H1 (cell line): ENCODE measurements at regions of chr6 and their contacts with region 1.

Region 1: DNA sequence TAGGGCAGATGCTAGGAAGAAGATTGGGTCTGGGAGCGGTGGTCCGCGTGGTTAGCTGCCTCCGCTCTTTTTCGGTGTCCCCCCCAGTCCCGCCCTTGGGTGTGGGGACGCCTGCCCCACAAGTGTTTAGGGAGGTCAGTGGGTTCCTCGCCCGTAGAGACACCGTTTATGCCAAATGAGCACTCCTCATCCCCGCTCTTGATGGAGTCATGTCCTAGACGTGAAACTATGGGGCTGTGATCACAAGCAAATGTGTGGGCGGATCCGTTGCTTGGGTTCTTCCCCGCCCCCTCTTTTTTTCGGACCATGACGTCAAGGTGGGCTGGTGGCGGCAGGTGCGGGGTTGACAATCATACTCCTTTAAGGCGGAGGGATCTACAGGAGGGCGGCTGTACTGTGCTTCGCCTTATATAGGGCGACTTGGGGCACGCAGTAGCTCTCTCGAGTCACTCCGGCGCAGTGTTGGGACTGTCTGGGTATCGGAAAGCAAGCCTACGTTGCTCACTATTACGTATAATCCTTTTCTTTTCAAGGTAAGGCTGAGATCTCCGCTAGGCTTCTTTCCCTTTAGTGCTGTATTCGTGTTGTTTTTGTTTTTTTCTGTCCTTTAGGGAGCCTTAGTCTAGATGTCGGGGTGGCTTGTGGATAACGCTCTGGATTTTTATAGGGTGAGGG is at the start of gene HSP90AB1:
- DNase-seq: peak; percentile 94 to 97
- H3K4me3 ChIP-seq: peak within 1 kb of the TSS; percentile 55 to 100 (median 98)
- H3K27ac ChIP-seq: peak within 1 kb of the TSS; percentile 95
- H3K4me1 ChIP-seq: peaks cover 7 to 18% (median 14%) of the 10 kb centered on the region in 4 experiments
- H3K27me3 ChIP-seq: no peaks in the 10 kb centered on the region
- CTCF ChIP-seq: no peak
- EP300 ChIP-seq: no peak
- POLR2A ChIP-seq: peak; percentile 99 to 100
- RAD21 ChIP-seq: no peak
- total RNA-seq, gene HSP90AB1: 2,224 and 2,297 TPM in 2 replicates

Region 2: GRCh38 chr6:44096612-44097011 is 150.2 kb before region 1 on chr6:
- CTCF ChIA-PET with region 1: interaction called, 5 read pairs
- POLR2A ChIA-PET with region 1: interaction called, 18 read pairs
- DNase-seq: peak in 1 of 2 experiments; percentile 75
- H3K4me3 ChIP-seq: no peak overlapping the region
- H3K27ac ChIP-seq: no peak overlapping the region
- H3K4me1 ChIP-seq: no peaks in the 10 kb centered on the region
- H3K27me3 ChIP-seq: no peaks in the 10 kb centered on the region
- CTCF ChIP-seq: peak; percentile 87 to 97 (median 87)
- EP300 ChIP-seq: no peak
- POLR2A ChIP-seq: no peak
- RAD21 ChIP-seq: peak; percentile 89 to 90

Region 3: GRCh38 chr6:44172731-44173500 is 73.9 kb before region 1 on chr6:
- CTCF ChIA-PET with region 1: interaction called, 19 read pairs
- POLR2A ChIA-PET with region 1: interaction called, 33 read pairs
- DNase-seq: peak in 1 of 2 experiments; percentile 91
- H3K4me3 ChIP-seq: no peak overlapping the region
- H3K27ac ChIP-seq: no peak overlapping the region
- H3K4me1 ChIP-seq: peaks cover 0 to 12% (median 3%) of the 10 kb centered on the region in 4 experiments; a peak in 6 of 7 replicates
- H3K27me3 ChIP-seq: no peaks in the 10 kb centered on the region
- CTCF ChIP-seq: peak; percentile 89 to 94 (median 90)
- EP300 ChIP-seq: no peak
- POLR2A ChIP-seq: no peak
- RAD21 ChIP-seq: peak; percentile 93 to 94

Region 4: DNA sequence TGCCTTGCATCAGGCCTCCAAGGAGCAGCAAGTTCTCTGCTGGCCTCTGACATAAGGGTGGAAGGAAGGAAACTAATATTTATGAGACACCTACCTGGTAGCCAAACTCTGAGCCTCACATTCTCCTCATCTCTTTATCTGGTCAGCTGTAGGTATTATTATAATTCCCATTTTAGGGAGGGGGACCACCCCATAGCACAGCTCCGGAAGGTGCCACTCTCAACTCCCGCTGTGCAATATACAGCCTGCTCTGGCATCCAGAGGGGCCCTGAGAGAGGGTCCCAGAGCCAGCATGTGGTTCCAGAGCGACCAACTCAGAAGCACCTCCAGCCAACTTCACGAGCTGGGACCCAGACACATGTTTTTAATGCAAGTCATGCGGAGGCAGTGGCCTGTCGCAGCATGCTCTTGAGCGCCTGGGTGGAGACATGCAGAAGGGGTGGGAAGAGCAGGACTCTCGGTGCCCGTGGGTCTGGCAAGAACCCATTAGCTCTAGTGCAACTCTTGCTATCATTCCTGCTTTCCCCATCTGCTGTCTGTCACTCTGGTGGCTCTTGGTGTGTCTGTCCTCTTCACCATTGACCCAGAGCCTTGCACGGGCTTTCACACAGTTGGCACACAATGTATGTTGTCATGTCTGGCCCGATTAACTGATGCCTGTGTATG is 45.0 kb before region 1 on chr6:
- CTCF ChIA-PET with region 1: interaction called, 6 read pairs
- POLR2A ChIA-PET with region 1: interaction called, 60 read pairs
- DNase-seq: no peak
- H3K4me3 ChIP-seq: no peak overlapping the region; a peak in 1 of 8 replicates
- H3K27ac ChIP-seq: peak overlapping the region; percentile 93
- H3K4me1 ChIP-seq: peaks cover 20 to 30% (median 28%) of the 10 kb centered on the region in 4 experiments
- H3K27me3 ChIP-seq: no peaks in the 10 kb centered on the region
- CTCF ChIP-seq: no peak
- EP300 ChIP-seq: no peak
- POLR2A ChIP-seq: no peak
- RAD21 ChIP-seq: no peak

Region 5: GRCh38 chr6:44257025-44257752 is 10.4 kb after region 1 on chr6 and contains the start of gene SLC35B2:
- CTCF ChIA-PET with region 1: interaction called, 43 read pairs
- POLR2A ChIA-PET with region 1: interaction called, 581 read pairs
- DNase-seq: peak in 1 of 2 experiments; percentile 85
- H3K4me3 ChIP-seq: peak within 1 kb of the TSS; percentile 67 to 85 (median 75)
- H3K27ac ChIP-seq: peak within 1 kb of the TSS; percentile 88
- H3K4me1 ChIP-seq: peaks cover 1 to 20% (median 7%) of the 10 kb centered on the region in 4 experiments; a peak in 6 of 7 replicates
- H3K27me3 ChIP-seq: no peaks in the 10 kb centered on the region
- CTCF ChIP-seq: peak in 2 of 3 experiments; percentile 70 to 91; a peak in 3 of 4 replicates
- EP300 ChIP-seq: peak; percentile 21 to 23; a peak in 2 of 3 replicates
- POLR2A ChIP-seq: peak in 1 of 2 experiments; percentile 67; a peak in 1 of 3 replicates
- RAD21 ChIP-seq: peak; percentile 6 to 59; a peak in 3 of 4 replicates
- total RNA-seq, gene SLC35B2: 29.5 and 32.3 TPM in 2 replicates

Region 6: GRCh38 chr6:44291841-44292240 is 45.0 kb after region 1 on chr6:
- CTCF ChIA-PET with region 1: no interaction called
- POLR2A ChIA-PET with region 1: interaction called, 34 read pairs
- DNase-seq: no peak
- H3K4me3 ChIP-seq: no peak overlapping the region
- H3K27ac ChIP-seq: no peak overlapping the region
- H3K4me1 ChIP-seq: no peaks in the 10 kb centered on the region; a peak in 2 of 7 replicates
- H3K27me3 ChIP-seq: peaks cover 0 to 20% (median 12%) of the 10 kb centered on the region in 4 experiments; a peak in 6 of 7 replicates
- CTCF ChIP-seq: no peak
- EP300 ChIP-seq: no peak
- POLR2A ChIP-seq: no peak
- RAD21 ChIP-seq: no peak

Region 7: DNA sequence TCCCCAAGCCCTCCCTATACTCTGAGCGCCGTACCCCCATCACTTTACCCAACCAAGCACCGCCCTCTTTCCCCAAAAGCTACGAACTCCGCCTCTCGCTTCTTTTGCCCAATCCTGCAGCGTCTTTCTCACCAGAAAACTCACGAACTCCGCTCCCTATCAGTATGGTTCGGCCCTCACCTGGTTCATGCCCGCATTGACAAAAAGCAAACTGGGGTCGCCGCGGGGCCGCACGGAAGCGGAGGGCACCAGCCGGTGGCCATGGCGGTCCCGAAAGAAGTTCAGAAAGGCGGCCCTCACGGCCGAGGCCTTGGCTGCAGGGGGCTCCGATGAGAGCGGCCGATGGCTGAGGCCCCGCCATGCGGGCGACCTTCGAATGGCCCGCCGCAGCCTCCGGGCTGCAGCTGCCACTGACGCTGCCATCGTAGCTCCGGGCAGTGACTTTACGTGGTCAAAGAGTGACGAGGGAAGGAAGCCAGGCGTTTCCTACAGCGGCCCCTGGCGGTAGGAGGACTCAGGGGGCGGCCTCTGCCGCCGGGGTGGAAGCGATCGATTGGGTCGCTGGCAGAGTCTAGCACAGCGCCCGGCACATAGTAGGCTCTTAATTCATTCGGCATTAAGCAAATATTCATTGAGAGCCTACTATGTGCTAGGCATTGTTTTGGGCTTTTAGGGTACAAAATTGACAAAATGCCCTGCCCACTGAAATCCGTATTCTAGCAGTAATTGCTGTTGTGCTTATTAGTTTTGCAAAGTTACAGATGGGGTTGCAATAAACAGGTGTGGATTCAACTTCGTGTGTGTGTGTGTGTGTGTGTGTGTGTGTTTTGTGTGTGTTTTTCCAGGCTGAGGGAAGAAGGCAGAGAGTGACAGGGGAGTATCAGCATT is 66.3 kb after region 1 on chr6 and contains the start of gene AARS2:
- CTCF ChIA-PET with region 1: interaction called, 4 read pairs
- POLR2A ChIA-PET with region 1: interaction called, 30 read pairs
- DNase-seq: peak; percentile 68 to 99
- H3K4me3 ChIP-seq: peak within 1 kb of the TSS; percentile 66 to 91 (median 88)
- H3K27ac ChIP-seq: peak within 1 kb of the TSS; percentile 64; the same call in 1 of the 2 replicates
- H3K4me1 ChIP-seq: peaks cover 3 to 6% (median 3%) of the 10 kb centered on the region in 4 experiments
- H3K27me3 ChIP-seq: peaks cover 0 to 1% (median 0%) of the 10 kb centered on the region in 4 experiments; a peak in 1 of 7 replicates
- CTCF ChIP-seq: peak; percentile 91 to 97 (median 95)
- EP300 ChIP-seq: peak in 1 of 2 experiments; percentile 21; a peak in 1 of 3 replicates
- POLR2A ChIP-seq: peak; percentile 94 to 98
- RAD21 ChIP-seq: peak; percentile 5 to 36; a peak in 2 of 4 replicates
- total RNA-seq, gene AARS2: 19.9 and 20.4 TPM in 2 replicates

Region 8: DNA sequence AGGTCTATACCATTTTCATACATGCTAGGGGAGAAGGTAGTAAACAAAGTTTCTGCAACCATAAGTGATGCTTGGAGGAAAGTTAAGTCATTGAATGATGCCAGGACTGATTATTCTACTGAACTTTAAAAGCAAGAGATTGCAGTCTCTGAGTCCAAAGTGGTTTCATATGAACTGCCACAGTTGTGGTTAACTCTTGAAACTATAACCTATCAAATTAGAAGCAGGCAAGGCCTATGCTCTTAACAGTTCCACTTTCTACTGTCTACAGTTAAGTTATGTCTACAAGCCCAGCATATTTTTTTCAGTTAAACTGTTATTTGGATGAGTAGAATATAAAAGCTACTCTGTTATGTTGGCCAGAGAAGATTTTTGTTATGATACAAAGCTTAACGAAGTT is 754.9 kb after region 1 on chr6:
- CTCF ChIA-PET with region 1: no interaction called
- POLR2A ChIA-PET with region 1: no interaction called
- DNase-seq: no peak
- H3K4me3 ChIP-seq: no peak overlapping the region
- H3K27ac ChIP-seq: no peak overlapping the region
- H3K4me1 ChIP-seq: no peaks in the 10 kb centered on the region
- H3K27me3 ChIP-seq: no peaks in the 10 kb centered on the region
- CTCF ChIP-seq: no peak
- EP300 ChIP-seq: no peak
- POLR2A ChIP-seq: no peak
- RAD21 ChIP-seq: no peak